Motor neuron (in vitro differentiated cells): ENCODE measurements at regions of chr15 and their contacts with region 1.

Region 1: GRCh38 chr15:62782039-62782791 is 260.3 kb upstream of the TPM1 start:
- ATAC-seq: peak; percentile 80 to 90 (median 85)
- H3K4me3 ChIP-seq: no peak overlapping the region
- H3K27ac ChIP-seq: no peak overlapping the region
- H3K4me1 ChIP-seq: peaks cover 21 to 23% of the 10 kb centered on the region in 2 donors

Region 2: DNA sequence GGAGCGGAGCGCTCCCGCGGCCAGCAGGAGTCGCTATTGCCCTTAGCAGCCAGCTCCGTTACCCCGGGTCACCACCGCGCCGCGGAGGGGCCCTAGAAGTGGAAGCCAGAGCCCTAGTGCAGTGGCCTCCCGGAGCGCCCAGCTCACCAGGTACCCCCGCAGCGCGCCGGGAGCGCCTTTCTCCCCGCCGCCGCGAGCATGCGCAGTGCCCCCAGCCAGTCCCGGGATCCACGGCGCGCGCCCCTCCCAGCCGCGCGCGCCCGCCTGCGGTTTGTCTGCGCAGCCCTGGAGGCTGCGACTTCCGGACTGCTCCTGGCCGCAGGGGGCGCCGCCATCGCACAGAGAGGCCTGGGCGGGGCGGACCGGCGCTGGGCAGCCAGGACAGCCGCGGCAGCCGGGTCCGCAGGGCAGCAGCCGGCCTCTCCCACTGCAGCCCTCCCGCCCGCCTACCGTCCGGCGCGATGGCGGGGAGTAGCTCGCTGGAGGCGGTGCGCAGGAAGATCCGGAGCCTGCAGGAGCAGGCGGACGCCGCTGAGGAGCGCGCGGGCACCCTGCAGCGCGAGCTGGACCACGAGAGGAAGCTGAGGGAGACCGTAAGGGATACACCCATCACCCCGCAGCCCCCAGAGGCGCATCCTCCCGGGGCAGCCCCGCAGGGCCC is 266.0 kb after region 1 on chr15:
- in situ Hi-C with region 1: loop called in 1 of 9 experiments (anchors 25 kb)
- ATAC-seq: peak; percentile 63 to 94 (median 91)
- H3K4me3 ChIP-seq: peak overlapping the region; percentile 48 to 72 (median 67)
- H3K27ac ChIP-seq: peak overlapping the region; percentile 55 to 77
- H3K4me1 ChIP-seq: peaks cover 40 to 52% of the 10 kb centered on the region in 2 donors

Region 3: GRCh38 chr15:63093486-63094205 is 311.4 kb after region 1 on chr15:
- in situ Hi-C with region 1: loop called in 2 of 9 experiments (anchors 25 kb)
- ATAC-seq: peak; percentile 81 to 98 (median 90)
- H3K4me3 ChIP-seq: no peak overlapping the region
- H3K27ac ChIP-seq: no peak overlapping the region
- H3K4me1 ChIP-seq: peaks cover 15 to 31% of the 10 kb centered on the region in 2 donors

Region 4: DNA sequence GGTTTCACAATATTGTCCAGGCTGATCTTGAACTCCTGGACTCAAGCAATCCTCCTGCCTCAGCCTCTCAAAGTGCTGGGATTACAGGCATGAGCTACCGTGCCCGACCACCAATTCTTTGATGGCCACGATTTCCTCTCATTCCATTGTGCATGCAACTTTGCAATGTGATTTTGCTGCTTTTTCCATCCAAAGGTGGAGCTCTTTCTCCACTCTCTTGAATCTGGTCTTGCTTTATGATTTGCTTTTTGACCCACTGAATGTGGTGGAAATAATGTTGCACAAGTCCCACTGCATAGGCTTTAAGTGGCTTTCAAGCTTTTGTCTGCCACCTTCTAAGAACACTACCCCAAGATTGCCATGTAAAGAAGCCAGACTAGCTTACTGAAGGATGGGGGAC is 364.5 kb after region 1 on chr15:
- in situ Hi-C with region 1: no loop called
- ATAC-seq: peak in 1 of 8 experiments; percentile 14
- H3K4me3 ChIP-seq: no peak overlapping the region
- H3K27ac ChIP-seq: no peak overlapping the region
- H3K4me1 ChIP-seq: no peaks in the 10 kb centered on the region